ENCODE measurements at regions of chr14 and their contacts with region 1.

Region 1: DNA sequence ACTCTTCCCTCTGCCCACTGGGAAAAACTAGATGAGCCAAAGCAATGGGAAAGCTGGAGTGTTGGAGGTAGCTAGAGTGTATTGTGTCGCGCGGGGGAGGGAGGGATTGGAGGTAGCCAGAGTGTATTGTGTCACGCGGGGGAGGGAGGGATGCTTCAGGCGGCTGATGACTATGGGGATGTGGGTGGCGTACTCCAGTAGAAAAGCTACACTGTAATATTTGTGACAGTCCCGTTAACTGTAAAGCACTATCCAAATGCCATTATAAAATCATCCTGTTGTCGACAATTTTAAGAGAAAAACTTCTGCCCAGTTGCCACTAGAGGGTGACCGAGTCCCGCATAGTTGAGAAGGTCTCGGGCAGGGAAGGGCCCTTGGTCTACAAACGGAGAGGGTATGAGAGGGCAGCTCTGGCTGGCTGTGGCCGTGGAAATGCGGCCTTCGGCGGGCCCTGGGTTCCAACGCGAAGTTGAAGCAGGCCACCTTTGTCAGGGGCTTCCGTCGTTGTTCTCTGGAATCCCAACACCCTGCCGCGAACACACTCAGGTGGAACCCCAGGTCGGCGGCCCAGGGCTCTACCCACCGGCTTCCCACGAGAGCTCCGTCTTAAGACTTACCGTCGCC is 15.1 kb upstream of the PLEK2 start:
- DNase-seq: peak; percentile 73 to 76 (median 74)
- H3K4me3 ChIP-seq: no peak overlapping the region
- H3K4me3 Mint-ChIP-seq: no peak overlapping the region
- H3K27ac ChIP-seq: no peak overlapping the region
- H3K27ac Mint-ChIP-seq: no peak overlapping the region
- H3K4me1 ChIP-seq: peaks cover 7% of the 10 kb centered on the region
- H3K4me1 Mint-ChIP-seq: no peaks in the 10 kb centered on the region
- H3K27me3 ChIP-seq: no peaks in the 10 kb centered on the region
- H3K27me3 Mint-ChIP-seq: peaks cover 12 to 21% of the 10 kb centered on the region in 2 donors

Region 2: DNA sequence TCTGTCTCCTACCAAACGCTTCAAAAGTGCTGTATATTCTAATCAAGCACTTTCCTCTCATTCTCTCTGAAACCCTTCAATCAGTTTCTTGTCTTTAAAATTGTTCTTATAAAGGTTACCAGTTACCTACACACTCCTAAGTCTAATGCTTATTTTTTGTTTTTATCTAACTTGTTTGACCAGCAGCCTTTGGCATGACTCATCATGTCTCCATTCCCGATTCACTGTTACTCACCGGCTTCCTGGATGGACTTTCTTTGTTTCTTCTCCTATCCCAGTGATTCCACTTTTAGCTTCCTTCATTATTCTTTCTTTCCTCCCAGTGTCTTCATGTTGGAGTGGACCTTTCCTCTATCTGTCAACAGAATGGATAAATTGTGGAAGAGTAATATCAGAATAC is 1309.5 kb before region 1 on chr14:
- CTCF ChIA-PET with region 1: no interaction called
- POLR2A ChIA-PET with region 1: no interaction called
- intact Hi-C with region 1: no loop called
- DNase-seq: no peak
- H3K4me3 ChIP-seq: no peak overlapping the region
- H3K4me3 Mint-ChIP-seq: peak overlapping the region in 1 of 8 donors; percentile 9
- H3K27ac ChIP-seq: no peak overlapping the region
- H3K27ac Mint-ChIP-seq: no peak overlapping the region
- H3K4me1 ChIP-seq: no peaks in the 10 kb centered on the region
- H3K4me1 Mint-ChIP-seq: no peaks in the 10 kb centered on the region
- H3K27me3 ChIP-seq: no peaks in the 10 kb centered on the region
- H3K27me3 Mint-ChIP-seq: peaks cover 3 to 7% of the 10 kb centered on the region in 2 donors

Region 3: DNA sequence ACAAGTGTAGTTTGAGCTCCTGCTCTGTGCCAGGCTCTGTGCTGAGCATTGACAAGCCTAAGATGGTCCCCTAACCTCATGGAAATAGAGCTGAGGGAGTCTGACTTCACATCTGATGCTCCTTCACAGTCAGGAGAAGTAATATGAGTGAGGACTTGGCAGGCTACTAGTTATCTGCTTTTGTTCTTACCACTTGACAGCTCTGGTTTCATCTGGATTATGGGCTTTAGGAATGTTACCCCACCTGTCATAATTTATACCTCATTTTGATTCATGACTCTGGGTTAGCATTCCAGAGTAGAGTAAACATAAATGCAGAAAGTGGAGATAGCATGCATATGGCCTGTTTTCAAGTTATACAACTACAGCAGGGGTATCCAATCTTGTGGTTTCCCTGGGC is 108.0 kb before region 1 on chr14:
- CTCF ChIA-PET with region 1: no interaction called
- POLR2A ChIA-PET with region 1: no interaction called
- intact Hi-C with region 1: no loop called
- DNase-seq: no peak
- H3K4me3 ChIP-seq: no peak overlapping the region
- H3K4me3 Mint-ChIP-seq: no peak overlapping the region
- H3K27ac ChIP-seq: no peak overlapping the region
- H3K27ac Mint-ChIP-seq: no peak overlapping the region
- H3K4me1 ChIP-seq: no peaks in the 10 kb centered on the region
- H3K4me1 Mint-ChIP-seq: no peaks in the 10 kb centered on the region
- H3K27me3 ChIP-seq: no peaks in the 10 kb centered on the region
- H3K27me3 Mint-ChIP-seq: no peaks in the 10 kb centered on the region

Region 4: DNA sequence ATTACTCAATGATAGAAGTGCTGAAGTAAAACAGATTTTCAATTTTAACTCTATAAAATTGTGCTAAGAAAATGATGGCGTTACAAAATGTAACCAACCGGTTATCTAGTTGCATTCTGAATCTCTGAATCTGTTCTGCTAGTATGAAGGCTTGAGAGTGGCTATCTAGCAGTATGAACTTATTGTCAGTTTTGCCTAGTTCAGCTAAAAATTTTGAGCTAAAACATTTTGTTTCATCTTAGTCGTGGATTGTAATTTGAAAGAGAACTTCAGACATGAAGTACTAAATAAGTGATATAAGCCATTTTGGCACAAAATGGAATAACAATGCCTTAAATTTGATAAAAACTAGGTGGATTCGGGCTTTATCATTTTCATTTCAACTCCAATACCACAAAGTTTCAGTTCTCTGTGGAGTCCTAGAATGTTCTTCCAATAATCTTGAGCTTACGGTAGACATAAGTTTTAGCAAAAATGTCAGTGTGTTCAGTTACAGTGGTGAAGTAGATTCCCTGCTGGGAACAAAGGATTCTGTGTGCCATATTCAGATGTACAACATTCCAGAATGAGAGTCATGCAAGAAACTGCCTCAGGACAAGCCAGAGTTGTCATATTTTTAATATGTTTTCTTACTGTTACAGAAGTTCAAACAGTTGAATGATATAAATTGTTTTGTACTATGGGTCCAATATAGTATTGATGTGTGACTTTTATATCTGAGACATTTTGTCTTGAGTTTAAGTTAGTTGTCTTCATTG is 95.5 kb before region 1 on chr14:
- CTCF ChIA-PET with region 1: no interaction called
- POLR2A ChIA-PET with region 1: no interaction called
- intact Hi-C with region 1: no loop called
- DNase-seq: no peak
- H3K4me3 ChIP-seq: no peak overlapping the region
- H3K4me3 Mint-ChIP-seq: no peak overlapping the region
- H3K27ac ChIP-seq: no peak overlapping the region
- H3K27ac Mint-ChIP-seq: no peak overlapping the region
- H3K4me1 ChIP-seq: no peaks in the 10 kb centered on the region
- H3K4me1 Mint-ChIP-seq: no peaks in the 10 kb centered on the region
- H3K27me3 ChIP-seq: no peaks in the 10 kb centered on the region
- H3K27me3 Mint-ChIP-seq: no peaks in the 10 kb centered on the region

Region 5: GRCh38 chr14:67411820-67412421 is 15.2 kb before region 1 on chr14 and contains the start of gene PLEK2:
- CTCF ChIA-PET with region 1: interaction called, 24 read pairs
- POLR2A ChIA-PET with region 1: no interaction called
- intact Hi-C with region 1: no loop called
- DNase-seq: peak; percentile 60 to 68 (median 64)
- H3K4me3 ChIP-seq: peak within 1 kb of the TSS; percentile 23 to 47
- H3K4me3 Mint-ChIP-seq: peak within 1 kb of the TSS; percentile 72 to 86 (median 78)
- H3K27ac ChIP-seq: no peak within 1 kb of the TSS
- H3K27ac Mint-ChIP-seq: peak within 1 kb of the TSS in 4 of 7 donors; percentile 32 to 78 (median 58)
- H3K4me1 ChIP-seq: no peaks in the 10 kb centered on the region
- H3K4me1 Mint-ChIP-seq: peaks cover 2 to 12% (median 5%) of the 10 kb centered on the region in 4 donors
- H3K27me3 ChIP-seq: no peaks in the 10 kb centered on the region
- H3K27me3 Mint-ChIP-seq: peaks cover 0 to 2% of the 10 kb centered on the region in 2 donors
- total RNA-seq, gene PLEK2: 1.9 to 4.1 TPM

Region 6: DNA sequence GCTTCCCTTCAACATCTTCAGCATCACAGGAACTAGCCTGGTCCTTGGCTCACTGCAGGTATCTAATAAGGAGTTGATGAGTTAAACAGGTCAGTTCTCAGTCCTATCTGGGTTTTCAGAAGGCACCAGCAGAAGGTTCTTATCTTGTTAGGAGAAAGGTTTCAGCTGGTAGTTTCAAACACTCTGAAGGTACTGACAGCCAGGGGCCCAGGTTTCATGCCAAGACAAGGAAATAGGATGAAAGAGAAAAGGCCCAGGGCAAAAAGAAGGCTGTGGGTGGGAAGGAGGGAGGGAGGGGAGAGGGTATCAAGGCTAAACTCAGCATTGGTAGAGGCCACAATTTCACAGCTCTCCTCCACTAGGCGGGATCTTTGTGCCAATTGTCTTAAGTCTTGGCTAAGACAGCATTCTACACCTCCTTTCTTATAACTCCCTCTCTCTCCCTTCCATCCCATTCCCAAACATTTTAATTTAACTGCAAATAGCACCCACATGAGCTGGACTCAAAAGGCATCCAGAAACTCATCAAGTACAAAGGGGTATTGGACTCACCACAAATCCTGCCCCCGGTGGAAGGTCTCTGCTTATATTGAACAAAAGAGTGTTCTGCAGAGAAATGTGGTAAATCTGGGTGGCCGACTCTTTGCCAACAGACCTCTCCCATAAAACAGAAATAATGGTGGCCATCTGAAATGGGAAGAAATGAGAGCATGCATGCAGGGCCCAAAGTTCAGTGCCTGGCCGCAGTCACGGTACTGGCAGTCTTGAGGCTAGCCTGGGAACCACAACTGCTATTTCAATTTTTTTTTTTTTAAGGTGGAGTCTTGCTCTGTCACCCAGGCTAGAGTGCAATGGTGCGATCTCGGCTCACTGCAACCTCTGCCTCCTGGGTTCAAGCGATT is 40.3 kb after region 1 on chr14:
- CTCF ChIA-PET with region 1: interaction called, 10 read pairs
- POLR2A ChIA-PET with region 1: no interaction called
- intact Hi-C with region 1: no loop called
- DNase-seq: no peak
- H3K4me3 ChIP-seq: no peak overlapping the region
- H3K4me3 Mint-ChIP-seq: peak overlapping the region in 2 of 8 donors; percentile 46 to 51
- H3K27ac ChIP-seq: no peak overlapping the region
- H3K27ac Mint-ChIP-seq: peak overlapping the region in 6 of 7 donors; percentile 28 to 77 (median 48)
- H3K4me1 ChIP-seq: peaks cover 25% of the 10 kb centered on the region
- H3K4me1 Mint-ChIP-seq: peaks cover 23 to 30% (median 26%) of the 10 kb centered on the region in 4 donors
- H3K27me3 ChIP-seq: no peaks in the 10 kb centered on the region
- H3K27me3 Mint-ChIP-seq: no peaks in the 10 kb centered on the region

Region 7: GRCh38 chr14:67526676-67527459 is 99.8 kb after region 1 on chr14:
- CTCF ChIA-PET with region 1: interaction called, 16 read pairs
- POLR2A ChIA-PET with region 1: no interaction called
- intact Hi-C with region 1: no loop called
- DNase-seq: peak; percentile 30 to 47 (median 31)
- H3K4me3 ChIP-seq: no peak overlapping the region
- H3K4me3 Mint-ChIP-seq: no peak overlapping the region
- H3K27ac ChIP-seq: no peak overlapping the region
- H3K27ac Mint-ChIP-seq: no peak overlapping the region
- H3K4me1 ChIP-seq: no peaks in the 10 kb centered on the region
- H3K4me1 Mint-ChIP-seq: peaks cover 2 to 9% (median 5%) of the 10 kb centered on the region in 4 donors
- H3K27me3 ChIP-seq: peaks cover 15% of the 10 kb centered on the region
- H3K27me3 Mint-ChIP-seq: peaks cover 13 to 44% of the 10 kb centered on the region in 2 donors

Region 8: DNA sequence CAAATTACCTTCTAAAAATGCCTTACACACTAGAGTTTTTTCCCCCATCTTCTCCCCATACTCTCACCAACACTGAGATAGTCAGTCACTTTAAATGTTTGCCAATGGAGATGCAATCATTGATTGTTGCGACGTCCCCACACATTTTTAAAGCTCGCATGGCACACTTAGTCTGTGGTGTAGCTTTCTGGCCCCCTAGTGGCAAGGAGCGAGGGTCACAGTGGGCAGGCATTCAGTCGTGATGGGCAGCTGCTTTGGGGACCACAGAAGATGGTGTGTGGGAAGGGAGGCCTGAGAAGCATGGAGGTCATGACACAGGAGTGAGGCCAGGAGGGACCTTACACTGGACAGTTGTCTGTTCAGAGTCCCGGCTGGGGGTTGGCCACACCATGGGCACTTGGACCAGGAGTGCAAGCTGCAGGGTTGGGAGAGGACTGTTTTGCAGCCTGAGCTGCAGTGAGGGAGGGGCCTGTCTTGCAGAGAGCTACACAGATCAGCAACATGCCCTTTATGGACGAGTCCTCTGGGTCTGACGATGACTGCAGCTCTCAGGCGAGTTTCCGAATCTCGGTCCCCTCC is 144.3 kb after region 1 on chr14:
- CTCF ChIA-PET with region 1: interaction called, 324 read pairs
- POLR2A ChIA-PET with region 1: interaction called, 13 read pairs
- intact Hi-C with region 1: no loop called
- DNase-seq: peak; percentile 57 to 66 (median 62)
- H3K4me3 ChIP-seq: no peak overlapping the region
- H3K4me3 Mint-ChIP-seq: no peak overlapping the region
- H3K27ac ChIP-seq: no peak overlapping the region
- H3K27ac Mint-ChIP-seq: no peak overlapping the region
- H3K4me1 ChIP-seq: no peaks in the 10 kb centered on the region
- H3K4me1 Mint-ChIP-seq: peaks cover 0 to 4% (median 3%) of the 10 kb centered on the region in 4 donors
- H3K27me3 ChIP-seq: no peaks in the 10 kb centered on the region
- H3K27me3 Mint-ChIP-seq: peaks cover 5 to 11% of the 10 kb centered on the region in 2 donors

Region 9: GRCh38 chr14:67599698-67600561 is 172.8 kb after region 1 on chr14 and contains the start of gene PIGH:
- CTCF ChIA-PET with region 1: interaction called, 11 read pairs
- POLR2A ChIA-PET with region 1: no interaction called
- intact Hi-C with region 1: loop called (anchors 1 kb)
- DNase-seq: peak; percentile 91 to 94 (median 92)
- H3K4me3 ChIP-seq: peak within 1 kb of the TSS; percentile 47 to 82
- H3K4me3 Mint-ChIP-seq: peak within 1 kb of the TSS; percentile 93 to 99 (median 98)
- H3K27ac ChIP-seq: peak within 1 kb of the TSS; percentile 72
- H3K27ac Mint-ChIP-seq: peak within 1 kb of the TSS; percentile 90 to 99 (median 98)
- H3K4me1 ChIP-seq: peaks cover 26% of the 10 kb centered on the region
- H3K4me1 Mint-ChIP-seq: peaks cover 23 to 55% (median 41%) of the 10 kb centered on the region in 4 donors
- H3K27me3 ChIP-seq: no peaks in the 10 kb centered on the region
- H3K27me3 Mint-ChIP-seq: peaks cover 0 to 1% of the 10 kb centered on the region in 2 donors
- total RNA-seq, gene PIGH: 28.0 to 35.8 TPM

Region 10: DNA sequence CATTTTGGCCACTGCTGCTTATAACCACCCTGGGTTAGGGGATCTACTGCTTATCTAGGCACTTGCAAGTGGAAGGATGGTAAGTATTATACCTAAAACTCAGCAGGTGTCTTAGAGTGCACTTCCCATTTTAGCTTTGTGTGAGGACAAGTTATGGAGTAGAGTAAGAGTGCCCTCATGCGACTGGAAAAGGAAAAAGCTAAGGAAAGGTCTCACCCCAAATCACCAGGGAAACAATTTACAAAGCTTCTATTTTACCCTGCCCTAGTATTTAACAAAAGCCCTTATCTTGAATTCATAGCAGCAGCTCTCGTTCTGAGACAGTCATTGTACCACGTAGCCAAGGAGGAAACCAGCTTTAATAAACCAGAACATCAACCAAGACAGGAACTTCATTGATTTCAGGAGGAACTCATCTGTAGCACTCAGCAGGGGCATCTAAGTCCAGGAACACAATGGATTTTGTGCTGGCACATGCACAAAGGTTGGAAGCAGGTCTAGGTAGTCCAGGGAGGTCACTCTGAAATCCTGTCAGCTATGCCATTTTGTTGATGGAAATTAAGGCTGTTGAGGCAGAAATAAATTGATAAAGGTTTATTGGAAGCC is 277.5 kb after region 1 on chr14:
- CTCF ChIA-PET with region 1: interaction called, 88 read pairs
- POLR2A ChIA-PET with region 1: interaction called, 7 read pairs
- intact Hi-C with region 1: loop called (anchors 1 kb)
- DNase-seq: peak in 4 of 5 donors; percentile 50 to 57 (median 52)
- H3K4me3 ChIP-seq: no peak overlapping the region
- H3K4me3 Mint-ChIP-seq: no peak overlapping the region
- H3K27ac ChIP-seq: no peak overlapping the region
- H3K27ac Mint-ChIP-seq: no peak overlapping the region
- H3K4me1 ChIP-seq: no peaks in the 10 kb centered on the region
- H3K4me1 Mint-ChIP-seq: no peaks in the 10 kb centered on the region
- H3K27me3 ChIP-seq: no peaks in the 10 kb centered on the region
- H3K27me3 Mint-ChIP-seq: peaks cover 3 to 4% of the 10 kb centered on the region in 2 donors

Measured in CD4-positive, alpha-beta memory T cell (primary cell).